ENCODE measurements at regions of chr14 and their contacts with region 1.

Region 1: GRCh38 chr14:78566026-78566858 is 396.1 kb downstream of the NRXN3 start:
- H3K4me3 Mint-ChIP-seq: no peak overlapping the region
- H3K27ac Mint-ChIP-seq: no peak overlapping the region
- H3K4me1 Mint-ChIP-seq: no peaks in the 10 kb centered on the region
- H3K27me3 Mint-ChIP-seq: no peaks in the 10 kb centered on the region

Region 2: DNA sequence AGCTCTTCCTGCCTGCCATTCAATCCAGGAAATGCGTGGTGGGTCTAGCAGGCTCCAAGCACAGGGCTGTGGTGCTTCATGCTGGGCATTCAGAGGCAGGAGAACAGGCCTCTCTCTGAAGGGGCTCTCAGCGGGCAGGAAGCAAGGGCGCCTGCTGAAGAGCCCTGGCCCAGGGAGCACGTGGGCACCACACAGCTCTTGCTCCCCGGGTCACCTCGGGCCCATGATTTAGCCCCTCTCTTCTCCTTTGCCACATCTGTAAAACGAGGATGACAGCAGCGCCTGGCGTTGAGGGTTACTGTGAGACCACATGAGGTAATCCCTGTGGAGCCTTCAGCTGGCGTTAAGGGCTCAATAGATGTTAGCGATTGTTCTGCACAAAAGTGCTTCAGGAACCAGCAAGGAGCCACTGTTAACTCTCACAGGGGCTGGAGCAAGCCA is 912.2 kb before region 1 on chr14:
- intact Hi-C with region 1: loop called (anchors 10 kb)
- H3K4me3 Mint-ChIP-seq: no peak overlapping the region
- H3K27ac Mint-ChIP-seq: no peak overlapping the region
- H3K4me1 Mint-ChIP-seq: peaks cover 45% of the 10 kb centered on the region
- H3K27me3 Mint-ChIP-seq: no peaks in the 10 kb centered on the region

Region 3: DNA sequence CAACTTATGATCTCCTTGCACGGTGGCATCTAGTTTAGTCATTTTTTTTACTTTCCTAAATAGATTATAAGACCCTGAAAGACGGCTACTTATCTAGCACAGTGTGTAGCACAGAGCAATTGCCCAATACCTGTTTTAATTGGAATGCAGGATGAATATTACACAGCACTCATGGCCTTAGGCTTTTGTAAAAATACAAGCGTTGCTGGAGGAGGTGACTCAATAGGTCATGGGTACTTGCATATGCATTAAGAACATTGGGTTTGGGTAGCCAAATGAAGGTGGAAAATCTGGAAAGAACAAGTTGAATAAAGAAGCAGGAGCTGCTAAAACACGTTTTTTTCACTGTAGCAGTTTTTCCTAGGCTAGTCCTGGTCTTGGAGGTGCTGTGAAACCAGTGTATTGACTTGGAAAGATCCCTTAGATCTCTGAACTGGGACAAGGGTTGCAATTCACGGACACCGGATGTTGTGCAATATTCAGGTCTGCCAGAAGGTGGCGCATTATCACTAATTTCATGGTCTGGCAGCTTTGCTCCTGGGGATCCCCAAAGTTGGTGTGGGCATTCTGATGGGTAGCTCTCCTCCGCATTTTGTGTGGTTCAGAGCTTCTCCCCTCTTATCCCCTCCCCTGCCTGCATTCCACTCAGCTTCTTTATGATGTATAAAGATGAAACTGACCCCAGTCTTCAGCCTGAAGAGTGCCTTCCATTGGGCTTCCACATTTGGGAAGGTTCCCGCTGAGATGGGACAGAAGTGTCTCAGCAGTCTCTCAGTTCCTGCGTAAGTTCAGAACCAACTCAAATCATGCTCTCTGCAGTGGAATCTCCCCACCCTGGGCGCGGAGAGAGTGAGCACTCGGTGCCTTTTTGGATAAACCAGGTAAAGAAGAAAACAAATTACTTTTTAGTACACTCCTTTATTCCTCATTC is 117.8 kb before region 1 on chr14:
- intact Hi-C with region 1: loop called (anchors 2 kb)
- H3K4me3 Mint-ChIP-seq: no peak overlapping the region
- H3K27ac Mint-ChIP-seq: no peak overlapping the region
- H3K4me1 Mint-ChIP-seq: peaks cover 14% of the 10 kb centered on the region
- H3K27me3 Mint-ChIP-seq: peaks cover 1% of the 10 kb centered on the region

Region 4: GRCh38 chr14:78612666-78613065 is 46.4 kb after region 1 on chr14:
- intact Hi-C with region 1: no loop called
- H3K4me3 Mint-ChIP-seq: no peak overlapping the region
- H3K27ac Mint-ChIP-seq: no peak overlapping the region
- H3K4me1 Mint-ChIP-seq: no peaks in the 10 kb centered on the region
- H3K27me3 Mint-ChIP-seq: no peaks in the 10 kb centered on the region

Measured in dendritic cell treated with granulocyte-macrophage colony-stimulating factor and Interleukin-4, amounts not matched to agents 40 ng/mL and 50 ng/mL, for 4 days (primary cell).